Left cardiac atrium (tissue), 4 donors: ENCODE measurements at regions of chr15 and their contacts with region 1.

Region 1: GRCh38 chr15:57146506-57147201 is 228.2 kb downstream of the TCF12 start:
- DNase-seq: no peak
- ATAC-seq: peak; percentile 53 to 75

Region 2: DNA sequence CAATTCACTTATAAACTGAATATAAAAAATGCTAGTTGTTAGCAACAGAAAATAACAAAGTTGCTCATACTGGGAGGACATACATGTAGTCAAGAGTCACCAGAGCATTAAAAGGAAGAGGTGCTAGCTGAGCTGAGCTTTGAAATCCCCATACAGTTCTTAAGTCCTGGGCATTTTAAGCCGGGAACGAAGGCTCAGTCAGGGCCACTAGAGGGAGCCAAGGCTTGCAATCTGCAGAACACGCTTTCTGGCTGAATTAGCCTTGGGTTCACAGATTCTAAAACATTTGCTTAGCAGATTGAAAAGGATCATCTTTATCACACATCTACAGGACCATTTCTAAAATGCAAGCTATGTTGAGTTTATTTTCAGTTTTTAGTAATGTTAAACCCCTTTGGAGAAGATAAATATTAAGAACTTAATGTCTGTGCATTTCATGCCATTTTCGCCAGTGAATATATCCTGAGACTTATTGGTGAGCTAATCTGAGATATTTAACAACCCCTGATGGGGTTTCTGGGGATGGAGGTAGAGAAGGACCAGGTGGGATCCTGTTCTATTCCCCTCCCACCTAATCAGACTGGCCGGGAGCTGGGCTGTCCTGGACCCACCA is 655.4 kb before region 1 on chr15:
- intact Hi-C with region 1: loop called in 1 of 2 experiments (anchors 10 kb)
- DNase-seq: peak; percentile 58
- ATAC-seq: peak; percentile 57 to 75

Region 3: DNA sequence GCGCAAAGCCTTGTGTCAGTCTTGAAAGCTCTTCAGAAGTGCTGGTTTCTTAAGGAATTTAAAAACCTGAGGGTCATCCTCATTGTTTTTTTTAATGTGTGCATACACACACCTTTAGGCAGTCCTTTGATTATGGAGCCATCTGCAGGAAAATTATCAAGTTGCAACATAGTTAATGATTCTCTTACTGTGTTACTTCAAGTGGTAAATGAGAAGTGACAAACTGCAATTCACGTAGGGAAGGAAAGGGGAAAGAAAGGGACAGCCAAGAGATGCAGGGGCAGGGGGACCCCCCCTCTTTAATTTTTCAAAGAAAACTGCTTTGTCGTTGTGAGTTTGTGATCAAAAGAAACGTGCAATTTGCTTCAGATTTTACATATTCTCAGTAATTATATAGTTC is 67.2 kb after region 1 on chr15:
- intact Hi-C with region 1: loop called (anchors 2 to 5 kb)
- DNase-seq: no peak
- ATAC-seq: peak; percentile 61 to 70

Region 4: DNA sequence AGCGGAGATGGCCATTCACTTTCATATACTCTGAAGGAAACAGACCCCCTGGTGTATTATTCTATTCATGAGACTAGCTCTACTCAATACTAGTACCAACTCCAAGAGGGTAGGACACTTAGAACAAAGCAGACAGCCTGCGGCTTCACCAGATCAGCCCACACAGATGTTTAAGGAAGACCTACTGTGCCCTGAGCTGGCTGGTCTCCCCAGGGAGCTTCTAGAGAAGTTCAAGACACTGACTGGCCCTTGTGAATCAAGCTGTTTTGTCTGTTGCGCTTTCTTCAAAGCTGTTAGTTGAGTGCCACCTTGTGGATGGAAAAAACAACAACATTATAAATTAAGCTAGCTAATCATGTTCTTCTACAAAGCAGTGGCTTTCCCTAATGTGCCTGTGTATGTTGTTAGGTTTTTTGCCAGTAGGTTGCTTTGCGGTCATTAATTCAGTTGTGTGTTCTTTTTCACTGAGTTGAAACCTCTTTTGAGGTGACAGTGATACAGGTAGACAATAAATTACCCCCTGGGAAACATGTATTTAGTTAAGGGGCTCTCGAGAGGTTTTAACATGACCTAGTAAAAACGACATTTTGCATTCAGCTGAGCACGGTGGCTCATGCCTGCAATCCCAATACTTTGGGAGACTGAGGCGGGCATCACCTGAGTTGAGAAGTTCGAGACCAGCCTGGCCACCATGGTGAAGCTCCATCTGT is 380.9 kb after region 1 on chr15:
- intact Hi-C with region 1: loop called in 1 of 2 experiments (anchors 10 kb)
- DNase-seq: peak; percentile 54
- ATAC-seq: peak; percentile 80 to 83